ENCODE measurements at regions of chr4 and their contacts with region 1.

Region 1: GRCh38 chr4:78056265-78057129 is 626 bp upstream of the FRAS1 start:
- DNase-seq: peak; percentile 92
- ATAC-seq: peak; percentile 78
- H3K4me3 ChIP-seq: peak overlapping the region; percentile 67 to 97 (median 85)
- H3K27ac ChIP-seq: peak overlapping the region; percentile 86
- H3K4me1 ChIP-seq: peaks cover 25% of the 10 kb centered on the region
- H3K27me3 ChIP-seq: no peaks in the 10 kb centered on the region; a peak in 1 of 5 replicates
- CTCF ChIP-seq: peak; percentile 75
- EP300 ChIP-seq: peak in 1 of 2 experiments; percentile 3; a peak in 1 of 4 replicates
- POLR2A ChIP-seq: peak; percentile 67 to 80
- RAD21 ChIP-seq: peak; percentile 38; the same call in 1 of the 2 replicates

Region 2: DNA sequence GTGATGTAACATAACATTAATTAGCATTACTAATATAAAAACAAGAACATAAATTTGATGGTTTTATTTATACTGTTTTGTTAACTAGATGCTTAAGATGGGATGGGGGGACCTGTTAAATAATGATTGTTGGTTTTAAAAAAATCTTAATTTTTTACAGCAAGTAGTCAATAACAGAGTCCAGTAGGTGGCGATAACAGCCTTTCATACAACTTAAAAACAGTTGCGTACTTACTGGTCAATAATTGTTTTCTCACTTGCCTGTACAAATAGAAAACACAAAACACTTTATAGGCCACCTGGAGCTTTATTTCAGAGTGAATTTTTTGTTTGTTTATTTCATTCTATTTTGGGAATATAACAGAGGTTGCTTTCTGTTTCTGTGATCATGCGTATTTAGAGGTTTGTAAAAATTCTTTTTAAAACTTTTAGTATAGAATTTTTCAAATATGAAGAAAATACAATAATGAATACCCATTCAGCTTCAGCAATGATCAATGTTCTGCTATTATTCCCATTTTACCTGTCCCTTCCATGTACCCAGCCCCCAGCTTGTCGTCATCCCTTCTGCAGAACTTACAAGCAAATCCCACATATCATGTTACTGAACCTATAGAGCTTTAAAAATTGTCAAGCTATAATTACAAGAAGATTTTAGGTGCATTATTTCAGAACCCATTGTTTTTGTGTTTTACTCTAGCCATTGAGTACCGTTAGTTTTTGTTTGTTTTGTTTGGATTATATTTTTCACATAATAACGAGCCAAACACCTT is 96.7 kb before region 1 on chr4:
- CTCF ChIA-PET with region 1: interaction called, 10 read pairs
- POLR2A ChIA-PET with region 1: interaction called, 3 read pairs
- in situ Hi-C with region 1: no loop called
- intact Hi-C with region 1: loop called (anchors 1 kb)
- DNase-seq: peak; percentile 63
- ATAC-seq: peak; percentile 57; the same call in 2 of the 3 replicates
- H3K4me3 ChIP-seq: no peak overlapping the region
- H3K27ac ChIP-seq: no peak overlapping the region
- H3K4me1 ChIP-seq: no peaks in the 10 kb centered on the region
- H3K27me3 ChIP-seq: no peaks in the 10 kb centered on the region
- CTCF ChIP-seq: peak; percentile 69
- EP300 ChIP-seq: no peak
- POLR2A ChIP-seq: no peak
- RAD21 ChIP-seq: peak; percentile 56

Region 3: DNA sequence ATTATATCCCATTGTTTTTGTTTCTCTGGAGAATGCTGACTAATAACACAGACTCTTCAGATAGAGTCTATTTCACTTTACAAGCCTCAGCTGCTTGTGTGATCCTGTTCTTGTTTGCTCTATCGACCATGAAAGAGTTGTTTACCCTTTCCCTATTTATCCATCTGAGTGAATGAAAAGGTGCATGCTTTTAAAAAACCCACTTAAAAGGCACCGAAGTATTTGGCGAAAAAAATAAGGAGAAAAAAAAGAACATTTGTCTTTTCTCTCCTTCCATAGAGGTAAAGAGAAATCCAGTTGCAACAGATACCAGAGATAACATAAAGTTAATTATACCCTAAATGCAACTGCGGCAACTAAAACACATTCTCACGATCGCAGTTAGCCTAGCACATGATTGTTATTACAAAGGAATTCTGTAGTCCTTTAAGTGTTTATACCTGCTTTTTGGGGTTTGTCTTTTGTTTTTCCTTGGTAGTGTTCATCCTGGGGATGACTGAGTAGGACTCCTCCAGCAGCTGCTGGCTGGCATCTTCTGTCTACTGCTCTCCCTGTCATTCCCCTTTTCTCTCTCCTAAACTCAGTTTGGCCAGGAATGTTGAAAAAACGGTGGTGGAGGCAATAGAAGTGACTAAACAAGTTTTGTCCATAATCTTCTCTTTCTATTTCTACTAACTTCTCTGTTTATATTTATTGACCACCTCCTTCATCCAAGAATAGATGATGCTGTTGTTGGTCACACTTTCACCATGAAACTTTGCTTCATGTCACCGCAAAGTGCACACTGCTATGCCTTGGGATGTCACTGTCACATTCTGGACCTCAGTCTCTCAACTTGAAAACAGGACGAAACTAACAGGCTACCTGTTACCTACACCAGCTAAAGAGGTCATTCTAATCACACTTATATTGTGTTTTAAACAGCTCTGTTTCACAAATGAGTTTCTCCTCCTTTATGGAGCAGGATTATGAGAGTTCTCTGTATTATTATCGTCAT is 41.3 kb before region 1 on chr4:
- CTCF ChIA-PET with region 1: no interaction called
- POLR2A ChIA-PET with region 1: interaction called, 5 read pairs
- in situ Hi-C with region 1: no loop called
- intact Hi-C with region 1: loop called (anchors 5 kb)
- DNase-seq: peak; percentile 91
- ATAC-seq: peak; percentile 98
- H3K4me3 ChIP-seq: peak overlapping the region in 2 of 3 experiments; percentile 46 to 48; a peak in 4 of 6 replicates
- H3K27ac ChIP-seq: peak overlapping the region; percentile 76
- H3K4me1 ChIP-seq: peaks cover 53% of the 10 kb centered on the region
- H3K27me3 ChIP-seq: no peaks in the 10 kb centered on the region
- CTCF ChIP-seq: no peak
- EP300 ChIP-seq: peak in 1 of 2 experiments; percentile 95; a peak in 2 of 4 replicates
- POLR2A ChIP-seq: no peak
- RAD21 ChIP-seq: no peak

Region 4: DNA sequence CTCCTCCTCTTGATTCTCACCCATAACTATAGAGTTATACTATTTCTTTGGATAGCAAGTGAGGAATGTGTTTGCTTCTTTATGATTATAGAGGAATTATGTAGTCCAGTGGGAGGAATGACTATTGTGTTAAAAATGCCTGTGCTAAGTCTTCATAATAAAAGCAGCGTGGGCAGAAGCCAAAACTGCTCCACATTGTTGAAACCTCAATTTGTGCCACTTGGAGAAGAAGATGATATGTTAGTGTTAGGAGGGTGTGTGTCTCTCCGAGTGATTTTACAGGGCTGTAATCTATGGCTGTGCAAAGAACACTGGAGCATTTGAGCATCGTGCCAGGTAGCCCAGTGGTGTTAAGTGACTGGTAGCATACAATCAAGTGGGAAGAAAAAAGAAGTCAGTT is 74.9 kb after region 1 on chr4:
- CTCF ChIA-PET with region 1: no interaction called
- POLR2A ChIA-PET with region 1: interaction called, 4 read pairs
- in situ Hi-C with region 1: no loop called
- intact Hi-C with region 1: loop called (anchors 5 kb)
- DNase-seq: no peak
- ATAC-seq: no peak
- H3K4me3 ChIP-seq: no peak overlapping the region
- H3K27ac ChIP-seq: peak overlapping the region; percentile 11
- H3K4me1 ChIP-seq: peaks cover 75% of the 10 kb centered on the region
- H3K27me3 ChIP-seq: no peaks in the 10 kb centered on the region
- CTCF ChIP-seq: no peak
- EP300 ChIP-seq: no peak
- POLR2A ChIP-seq: no peak
- RAD21 ChIP-seq: no peak

Region 5: DNA sequence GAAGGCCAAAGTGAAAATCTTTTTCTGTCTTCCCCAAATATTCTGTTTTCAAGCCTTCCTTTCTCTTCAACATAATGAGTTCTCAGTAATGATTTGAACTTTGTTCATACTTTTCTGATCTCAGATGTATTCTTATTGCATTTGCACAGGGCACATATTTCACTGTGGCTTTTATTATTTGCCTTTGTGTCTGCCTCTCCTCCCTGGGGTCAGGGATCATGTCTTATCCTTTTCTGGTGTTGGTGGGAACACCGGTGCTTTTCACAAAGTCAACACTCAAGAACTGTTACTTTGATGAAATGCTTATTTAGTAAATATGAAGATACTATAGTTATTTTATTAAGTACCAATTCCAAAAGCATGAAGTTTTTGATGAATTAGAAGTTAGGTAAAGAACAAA is 144.5 kb after region 1 on chr4:
- CTCF ChIA-PET with region 1: no interaction called
- POLR2A ChIA-PET with region 1: no interaction called
- in situ Hi-C with region 1: no loop called
- intact Hi-C with region 1: loop called (anchors 1 kb)
- DNase-seq: peak; percentile 84
- ATAC-seq: peak; percentile 79
- H3K4me3 ChIP-seq: no peak overlapping the region; a peak in 1 of 6 replicates
- H3K27ac ChIP-seq: no peak overlapping the region
- H3K4me1 ChIP-seq: peaks cover 89% of the 10 kb centered on the region
- H3K27me3 ChIP-seq: no peaks in the 10 kb centered on the region
- CTCF ChIP-seq: no peak
- EP300 ChIP-seq: peak in 1 of 2 experiments; percentile 90; a peak in 2 of 4 replicates
- POLR2A ChIP-seq: no peak
- RAD21 ChIP-seq: no peak

Region 6: GRCh38 chr4:78242071-78242470 is 185.6 kb after region 1 on chr4:
- CTCF ChIA-PET with region 1: no interaction called
- POLR2A ChIA-PET with region 1: no interaction called
- in situ Hi-C with region 1: no loop called
- intact Hi-C with region 1: no loop called
- DNase-seq: no peak
- ATAC-seq: no peak
- H3K4me3 ChIP-seq: no peak overlapping the region
- H3K27ac ChIP-seq: no peak overlapping the region
- H3K4me1 ChIP-seq: no peaks in the 10 kb centered on the region
- H3K27me3 ChIP-seq: no peaks in the 10 kb centered on the region
- CTCF ChIP-seq: no peak
- EP300 ChIP-seq: no peak
- POLR2A ChIP-seq: no peak
- RAD21 ChIP-seq: no peak

Region 7: DNA sequence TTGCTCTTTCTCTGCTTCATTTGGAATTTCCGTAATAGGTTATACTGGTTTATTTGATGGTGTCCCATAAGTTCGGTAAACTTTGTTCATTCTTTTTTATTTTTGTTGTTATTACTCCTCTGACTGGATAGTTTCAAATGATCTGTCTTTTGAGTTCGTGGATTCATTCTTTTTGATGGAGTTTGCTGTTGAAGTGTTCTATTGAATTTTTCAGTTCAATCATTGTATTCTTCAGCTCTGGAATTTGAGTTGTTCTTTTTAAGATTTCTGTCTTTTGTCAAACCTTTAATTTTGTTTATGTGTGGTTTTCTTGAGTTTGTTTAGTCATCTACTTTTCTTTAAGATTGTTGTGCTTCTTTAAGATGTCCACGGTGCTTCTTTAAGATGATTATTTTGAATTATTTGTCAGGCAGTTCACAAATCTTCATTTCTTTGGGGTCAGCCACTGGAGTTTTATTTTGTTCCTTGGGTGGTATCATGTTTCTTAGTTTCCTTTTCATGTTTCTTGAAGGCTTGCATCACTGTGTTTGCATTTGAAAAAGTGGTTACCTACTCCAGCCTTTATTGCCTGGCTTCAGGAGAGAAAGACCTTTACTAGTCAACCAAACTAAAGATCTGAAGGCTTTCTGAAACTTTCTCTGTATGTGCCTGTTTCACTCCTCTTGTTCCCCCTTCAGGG is 340.3 kb after region 1 on chr4:
- CTCF ChIA-PET with region 1: no interaction called
- POLR2A ChIA-PET with region 1: no interaction called
- in situ Hi-C with region 1: no loop called
- intact Hi-C with region 1: loop called (anchors 10 kb)
- DNase-seq: no peak
- ATAC-seq: no peak
- H3K4me3 ChIP-seq: no peak overlapping the region
- H3K27ac ChIP-seq: no peak overlapping the region
- H3K4me1 ChIP-seq: no peaks in the 10 kb centered on the region
- H3K27me3 ChIP-seq: no peaks in the 10 kb centered on the region
- CTCF ChIP-seq: no peak
- EP300 ChIP-seq: no peak
- POLR2A ChIP-seq: no peak
- RAD21 ChIP-seq: no peak

Region 8: DNA sequence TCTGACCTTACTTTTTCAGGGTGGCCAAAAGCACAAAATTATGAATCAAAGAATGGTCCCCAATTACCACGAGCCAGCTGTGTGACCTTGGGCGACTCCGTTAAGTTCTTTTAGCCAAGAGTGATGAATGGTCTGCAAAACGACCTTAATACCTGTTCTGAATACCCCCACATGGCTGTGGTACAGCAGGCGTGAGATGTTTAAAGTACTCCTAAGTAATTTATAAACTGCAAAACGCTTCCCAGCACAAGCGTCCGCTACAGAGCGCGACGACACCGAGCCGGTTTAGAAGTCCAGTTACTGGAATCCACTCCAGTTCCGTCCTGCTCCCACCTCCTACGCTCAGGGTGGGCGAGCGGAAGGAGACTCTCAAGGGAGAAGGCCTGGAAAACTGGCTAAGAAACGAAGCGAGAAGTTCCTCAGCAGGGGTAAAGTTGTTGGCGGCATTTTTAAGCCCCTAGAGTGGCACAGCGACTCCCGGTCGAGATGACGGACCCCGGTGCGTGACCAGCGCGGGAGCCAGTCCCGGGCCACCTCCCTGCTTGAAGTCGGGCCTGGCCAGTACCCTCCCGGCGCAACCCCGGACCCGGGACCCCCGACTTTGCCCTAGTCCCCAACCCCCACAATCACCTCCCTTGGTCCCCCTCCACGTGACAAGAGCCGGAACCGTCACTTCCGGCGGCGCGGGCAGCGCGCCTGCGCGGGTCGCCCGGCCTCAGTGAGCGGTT is 719.0 kb after region 1 on chr4:
- CTCF ChIA-PET with region 1: no interaction called
- POLR2A ChIA-PET with region 1: no interaction called
- in situ Hi-C with region 1: no loop called
- intact Hi-C with region 1: loop called (anchors 5 kb)
- DNase-seq: peak; percentile 71
- ATAC-seq: peak; percentile 73
- H3K4me3 ChIP-seq: peak overlapping the region; percentile 83 to 95 (median 95)
- H3K27ac ChIP-seq: peak overlapping the region; percentile 100
- H3K4me1 ChIP-seq: peaks cover 34% of the 10 kb centered on the region
- H3K27me3 ChIP-seq: no peaks in the 10 kb centered on the region; a peak in 1 of 5 replicates
- CTCF ChIP-seq: no peak
- EP300 ChIP-seq: 0 out of 4 replicates have a peak, but pooled peaks of 1 of the 2 experiments have one; percentile 24
- POLR2A ChIP-seq: peak; percentile 72 to 80
- RAD21 ChIP-seq: no peak

Measured in HepG2 (cell line).